ENCODE measurements at regions of chr1 and their contacts with region 1.

Region 1: GRCh38 chr1:27332536-27333281 is 9.1 kb upstream of the SYTL1 start:
- DNase-seq: no peak
- H3K4me3 ChIP-seq: no peak overlapping the region
- H3K27me3 ChIP-seq: no peaks in the 10 kb centered on the region
- CTCF ChIP-seq: peak; percentile 93

Region 2: GRCh38 chr1:27321813-27322577 is 10.7 kb before region 1 on chr1 and contains the start of gene TMEM222:
- CTCF ChIA-PET with region 1: interaction called, 33 read pairs
- POLR2A ChIA-PET with region 1: no interaction called
- DNase-seq: peak; percentile 75
- H3K4me3 ChIP-seq: peak within 1 kb of the TSS; percentile 89
- H3K27me3 ChIP-seq: no peaks in the 10 kb centered on the region
- CTCF ChIP-seq: no peak
- polyA plus RNA-seq, gene TMEM222: 39.4 and 76.2 TPM in 2 replicates

Region 3: GRCh38 chr1:27349784-27350662 is 17.3 kb after region 1 on chr1:
- CTCF ChIA-PET with region 1: interaction called, 54 read pairs
- POLR2A ChIA-PET with region 1: no interaction called
- DNase-seq: peak; percentile 10
- H3K4me3 ChIP-seq: peak overlapping the region; percentile 52
- H3K27me3 ChIP-seq: no peaks in the 10 kb centered on the region
- CTCF ChIP-seq: no peak

Region 4: GRCh38 chr1:27357281-27358037 is 24.8 kb after region 1 on chr1:
- CTCF ChIA-PET with region 1: interaction called, 20 read pairs
- POLR2A ChIA-PET with region 1: no interaction called
- DNase-seq: no peak
- H3K4me3 ChIP-seq: no peak overlapping the region
- H3K27me3 ChIP-seq: no peaks in the 10 kb centered on the region
- CTCF ChIP-seq: peak; percentile 91

Region 5: GRCh38 chr1:27365372-27366112 is 32.8 kb after region 1 on chr1:
- CTCF ChIA-PET with region 1: interaction called, 12 read pairs
- POLR2A ChIA-PET with region 1: interaction called, 13 read pairs
- DNase-seq: peak; percentile 65
- H3K4me3 ChIP-seq: peak overlapping the region; percentile 56
- H3K27me3 ChIP-seq: no peaks in the 10 kb centered on the region
- CTCF ChIP-seq: no peak

Region 6: DNA sequence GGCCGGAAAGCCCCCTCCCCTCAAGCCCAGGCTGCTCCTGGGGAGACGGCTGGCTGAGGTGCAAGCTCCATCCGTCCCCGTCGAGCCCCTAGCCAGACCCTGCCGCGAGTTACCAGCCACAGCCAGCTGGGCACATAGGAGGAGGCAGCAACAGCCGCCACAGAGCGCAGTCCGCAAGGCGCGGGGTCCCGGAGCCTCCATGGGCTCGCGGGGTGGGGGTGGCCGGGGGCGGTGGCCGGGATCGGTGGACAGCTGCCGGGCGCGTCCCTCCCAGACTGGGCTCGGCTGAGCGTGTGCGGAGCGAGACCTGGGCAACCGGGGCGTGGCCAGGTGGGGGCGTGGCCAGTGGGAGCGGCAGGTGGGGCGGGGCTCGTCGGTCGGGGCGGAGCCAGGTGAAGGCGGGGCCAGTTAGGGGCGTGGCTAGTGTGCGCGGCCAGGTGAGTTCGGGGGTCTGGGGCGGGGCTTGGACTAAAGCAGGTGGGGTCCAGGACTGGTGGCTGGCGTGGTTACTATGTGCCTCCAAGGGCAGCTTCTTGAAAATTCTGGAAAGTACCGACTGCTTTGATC is 50.4 kb after region 1 on chr1 and contains the start of gene CD164L2:
- CTCF ChIA-PET with region 1: interaction called, 33 read pairs
- POLR2A ChIA-PET with region 1: no interaction called
- DNase-seq: no peak
- H3K4me3 ChIP-seq: no peak within 1 kb of the TSS
- H3K27me3 ChIP-seq: peaks cover 9% of the 10 kb centered on the region
- CTCF ChIP-seq: no peak
- polyA plus RNA-seq, gene CD164L2: not detected in 2 replicates

Measured in BJ (cell line).